ENCODE measurements at regions of chr7 and their contacts with region 1.

Region 1: GRCh38 chr7:26376175-26376917 is 84.7 kb downstream of the SNX10 start:
- DNase-seq: peak; percentile 75 to 89 (median 87)
- H3K4me3 ChIP-seq: peak overlapping the region; percentile 83 to 90 (median 85)
- H3K27ac ChIP-seq: peak overlapping the region; percentile 77 to 87
- H3K4me1 ChIP-seq: peaks cover 20 to 55% (median 33%) of the 10 kb centered on the region in 4 experiments
- H3K27me3 ChIP-seq: no peaks in the 10 kb centered on the region

Region 2: DNA sequence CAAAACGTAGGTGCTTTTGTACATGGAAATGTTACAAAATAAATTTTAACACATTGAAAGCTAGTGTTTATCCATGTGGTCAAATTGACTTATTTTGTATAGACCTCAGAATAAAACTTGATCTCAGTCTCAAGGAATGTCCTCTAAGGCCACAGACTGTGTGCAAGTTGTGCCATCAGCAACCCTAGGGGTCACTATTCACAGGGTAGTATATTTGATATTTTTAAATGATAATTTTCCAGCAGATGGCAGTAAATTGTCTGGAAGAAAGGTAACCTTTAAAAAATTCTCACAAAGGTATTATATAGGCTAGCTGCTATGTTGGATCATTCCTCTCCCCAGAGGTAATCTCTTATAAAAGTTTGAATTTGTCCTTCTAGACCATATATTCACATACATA is 97.6 kb before region 1 on chr7:
- CTCF ChIA-PET with region 1: no interaction called
- POLR2A ChIA-PET with region 1: no interaction called
- DNase-seq: peak; percentile 60 to 66 (median 64)
- H3K4me3 ChIP-seq: peak overlapping the region in 3 of 7 experiments; percentile 11 to 70 (median 48)
- H3K27ac ChIP-seq: no peak overlapping the region
- H3K4me1 ChIP-seq: peaks cover 0 to 4% (median 2%) of the 10 kb centered on the region in 4 experiments
- H3K27me3 ChIP-seq: no peaks in the 10 kb centered on the region

Region 3: GRCh38 chr7:26398756-26399501 is 22.6 kb after region 1 on chr7:
- CTCF ChIA-PET with region 1: interaction called, 12 read pairs
- POLR2A ChIA-PET with region 1: no interaction called
- DNase-seq: peak; percentile 79 to 93 (median 91)
- H3K4me3 ChIP-seq: peak overlapping the region; percentile 46 to 83 (median 76)
- H3K27ac ChIP-seq: peak overlapping the region; percentile 66 to 85
- H3K4me1 ChIP-seq: peaks cover 5 to 40% (median 29%) of the 10 kb centered on the region in 4 experiments
- H3K27me3 ChIP-seq: no peaks in the 10 kb centered on the region

Region 4: GRCh38 chr7:26500749-26501352 is 124.5 kb after region 1 on chr7:
- CTCF ChIA-PET with region 1: interaction called, 12 read pairs
- POLR2A ChIA-PET with region 1: no interaction called
- DNase-seq: peak; percentile 62 to 78 (median 77)
- H3K4me3 ChIP-seq: no peak overlapping the region
- H3K27ac ChIP-seq: no peak overlapping the region
- H3K4me1 ChIP-seq: peaks cover 0 to 23% (median 6%) of the 10 kb centered on the region in 4 experiments
- H3K27me3 ChIP-seq: no peaks in the 10 kb centered on the region

Region 5: DNA sequence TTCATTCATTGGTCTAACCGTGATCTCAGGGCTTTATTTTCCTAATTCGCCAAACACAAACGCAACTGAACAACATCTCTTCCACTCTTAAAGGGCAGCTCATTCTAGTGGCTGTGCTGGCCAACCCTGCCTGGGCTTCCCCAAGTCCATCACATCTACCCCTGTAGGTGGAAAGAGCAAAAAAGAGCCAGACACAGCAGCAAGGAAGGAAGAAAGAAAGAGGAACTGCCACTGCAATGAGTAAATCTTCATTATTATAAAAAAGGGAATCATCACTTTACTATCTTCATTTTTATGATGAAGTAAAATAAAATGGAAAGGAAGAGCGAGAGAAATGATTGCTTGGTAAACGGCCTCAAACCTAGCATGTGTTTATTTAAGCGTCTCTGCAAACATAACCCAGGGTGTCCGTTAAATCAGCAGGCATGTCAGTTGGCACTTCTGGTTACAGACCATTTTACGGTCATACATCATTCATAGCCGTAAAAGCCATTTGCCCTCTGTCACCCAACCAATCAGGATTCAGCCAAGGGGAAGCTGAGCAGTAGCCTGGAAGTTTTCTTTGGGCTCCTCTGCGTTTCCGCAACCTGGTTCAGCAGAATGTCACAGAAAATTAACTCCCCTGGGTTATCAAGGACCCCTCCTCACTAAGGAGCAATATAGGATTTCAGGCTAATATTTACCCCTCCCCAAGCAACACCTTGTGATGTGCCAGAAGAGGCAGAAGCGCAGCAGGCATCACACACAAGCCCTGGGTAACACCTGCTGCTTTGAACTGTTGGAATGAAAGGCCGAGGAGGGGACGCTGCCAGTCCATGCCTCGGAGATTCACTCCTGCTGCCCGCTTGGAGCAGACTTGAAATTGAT is 149.3 kb after region 1 on chr7:
- CTCF ChIA-PET with region 1: no interaction called
- POLR2A ChIA-PET with region 1: no interaction called
- DNase-seq: peak in 2 of 3 donors; percentile 63 to 72
- H3K4me3 ChIP-seq: peak overlapping the region in 4 of 7 experiments; percentile 12 to 50 (median 34)
- H3K27ac ChIP-seq: no peak overlapping the region
- H3K4me1 ChIP-seq: peaks cover 7 to 17% (median 12%) of the 10 kb centered on the region in 4 experiments
- H3K27me3 ChIP-seq: no peaks in the 10 kb centered on the region

Measured in common myeloid progenitor, CD34-positive (primary cell).